CD8-positive, alpha-beta T cell (primary cell): ENCODE measurements at regions of chr3 and their contacts with region 1.

Region 1: GRCh38 chr3:41222501-41222900 is 23.2 kb downstream of the CTNNB1 start:
- DNase-seq: no peak
- ATAC-seq: no peak
- H3K4me3 ChIP-seq: no peak overlapping the region
- H3K4me3 Mint-ChIP-seq: no peak overlapping the region
- H3K27ac ChIP-seq: no peak overlapping the region
- H3K27ac Mint-ChIP-seq: peak overlapping the region; percentile 11
- H3K4me1 ChIP-seq: peaks cover 29% of the 10 kb centered on the region
- H3K4me1 Mint-ChIP-seq: peaks cover 73% of the 10 kb centered on the region
- H3K27me3 ChIP-seq: no peaks in the 10 kb centered on the region
- H3K27me3 Mint-ChIP-seq: no peaks in the 10 kb centered on the region
- CTCF ChIP-seq: no peak

Region 2: GRCh38 chr3:41234823-41235721 is 12.6 kb after region 1 on chr3:
- CTCF ChIA-PET with region 1: no interaction called
- POLR2A ChIA-PET with region 1: interaction called, 3 read pairs
- intact Hi-C with region 1: loop called in 1 of 2 experiments (anchors 2 kb)
- DNase-seq: no peak
- ATAC-seq: no peak
- H3K4me3 ChIP-seq: no peak overlapping the region
- H3K4me3 Mint-ChIP-seq: no peak overlapping the region
- H3K27ac ChIP-seq: no peak overlapping the region
- H3K27ac Mint-ChIP-seq: no peak overlapping the region
- H3K4me1 ChIP-seq: no peaks in the 10 kb centered on the region
- H3K4me1 Mint-ChIP-seq: peaks cover 5% of the 10 kb centered on the region
- H3K27me3 ChIP-seq: no peaks in the 10 kb centered on the region
- H3K27me3 Mint-ChIP-seq: no peaks in the 10 kb centered on the region
- CTCF ChIP-seq: no peak